ENCODE measurements at regions of chr1 and their contacts with region 1.

Region 1: DNA sequence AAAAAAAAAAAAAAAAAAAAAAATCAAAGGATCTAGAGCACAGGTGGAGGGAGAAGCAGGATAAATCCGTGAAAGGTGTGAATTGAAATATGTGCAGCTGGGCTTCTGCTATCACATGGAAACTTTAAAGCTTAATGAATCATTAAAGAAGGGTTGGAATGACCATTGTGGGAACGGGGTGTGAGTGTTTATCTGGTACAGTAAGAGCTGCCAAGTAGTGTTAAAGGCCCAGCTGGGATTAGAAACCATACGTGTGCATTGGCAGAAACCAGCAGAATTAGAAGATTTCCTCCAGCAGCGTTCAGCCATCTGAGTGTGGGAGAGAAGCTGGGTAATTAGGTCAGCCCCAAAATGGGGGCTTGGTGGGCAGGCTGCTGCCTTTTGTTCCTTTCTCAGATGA is 13.5 kb downstream of the FALEC start:
- DNase-seq: peak; percentile 25
- H3K4me3 Mint-ChIP-seq: no peak overlapping the region
- H3K27ac Mint-ChIP-seq: no peak overlapping the region
- H3K4me1 Mint-ChIP-seq: peaks cover 13% of the 10 kb centered on the region
- H3K27me3 Mint-ChIP-seq: no peaks in the 10 kb centered on the region
- CTCF ChIP-seq: no peak

Region 2: GRCh38 chr1:150268705-150269403 is 260.2 kb before region 1 on chr1 and contains the start of gene APH1A:
- CTCF ChIA-PET with region 1: interaction called, 10 read pairs
- POLR2A ChIA-PET with region 1: no interaction called
- intact Hi-C with region 1: no loop called
- DNase-seq: peak; percentile 99
- H3K4me3 Mint-ChIP-seq: peak within 1 kb of the TSS; percentile 81
- H3K27ac Mint-ChIP-seq: peak within 1 kb of the TSS; percentile 83
- H3K4me1 Mint-ChIP-seq: peaks cover 32% of the 10 kb centered on the region
- H3K27me3 Mint-ChIP-seq: no peaks in the 10 kb centered on the region
- CTCF ChIP-seq: no peak
- total RNA-seq, gene APH1A: 123 and 154 TPM in 2 replicates

Region 3: GRCh38 chr1:150366416-150367296 is 162.4 kb before region 1 on chr1:
- CTCF ChIA-PET with region 1: no interaction called
- POLR2A ChIA-PET with region 1: no interaction called
- intact Hi-C with region 1: no loop called
- DNase-seq: peak; percentile 35
- H3K4me3 Mint-ChIP-seq: peak overlapping the region; percentile 92
- H3K27ac Mint-ChIP-seq: peak overlapping the region; percentile 97
- H3K4me1 Mint-ChIP-seq: peaks cover 25% of the 10 kb centered on the region
- H3K27me3 Mint-ChIP-seq: no peaks in the 10 kb centered on the region
- CTCF ChIP-seq: no peak

Region 4: GRCh38 chr1:150464422-150464826 is 64.6 kb before region 1 on chr1:
- CTCF ChIA-PET with region 1: interaction called, 13 read pairs
- POLR2A ChIA-PET with region 1: no interaction called
- intact Hi-C with region 1: loop called (anchors 1 kb)
- DNase-seq: peak; percentile 72
- H3K4me3 Mint-ChIP-seq: no peak overlapping the region
- H3K27ac Mint-ChIP-seq: no peak overlapping the region
- H3K4me1 Mint-ChIP-seq: no peaks in the 10 kb centered on the region
- H3K27me3 Mint-ChIP-seq: no peaks in the 10 kb centered on the region
- CTCF ChIP-seq: peak; percentile 80

Region 5: DNA sequence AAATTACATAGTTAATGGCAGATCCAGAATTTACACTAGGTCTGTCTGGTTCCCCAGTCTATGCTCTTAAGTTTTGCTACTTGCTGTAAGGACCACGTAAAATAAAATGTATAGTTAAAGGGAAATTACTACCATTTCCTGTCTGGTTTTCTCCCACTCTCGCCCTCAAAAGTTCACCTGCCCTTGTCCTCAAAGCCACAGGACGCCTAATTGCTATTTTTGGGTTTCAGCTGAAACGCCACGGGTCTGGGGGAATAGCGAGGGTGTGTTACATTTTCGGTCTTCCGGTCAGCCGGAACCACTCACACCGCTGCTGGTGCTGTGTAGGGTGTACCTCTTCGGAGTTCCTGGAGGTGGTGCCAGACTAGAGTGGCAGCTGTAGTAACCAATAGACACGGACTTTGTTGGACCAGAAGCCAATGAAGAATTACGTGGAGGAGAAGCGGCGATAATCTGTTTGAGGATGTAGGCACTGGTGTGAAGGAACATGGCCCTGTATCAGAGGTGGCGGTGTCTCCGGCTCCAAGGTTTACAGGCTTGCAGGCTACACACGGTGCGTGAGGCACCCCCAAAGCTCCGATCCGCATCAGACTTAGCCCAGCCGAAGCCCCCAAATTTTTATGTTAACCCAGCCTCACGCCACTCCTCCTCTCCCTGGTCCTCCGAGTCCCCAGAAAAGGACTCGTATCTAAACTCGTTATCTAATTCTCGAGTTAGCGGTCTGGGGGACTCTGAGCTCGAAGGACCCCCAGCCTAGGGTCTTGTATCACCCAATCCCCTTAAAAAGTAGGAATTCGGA is 41.9 kb before region 1 on chr1 and contains the start of gene TARS2:
- CTCF ChIA-PET with region 1: interaction called, 7 read pairs
- POLR2A ChIA-PET with region 1: interaction called, 11 read pairs
- intact Hi-C with region 1: loop called (anchors 1 kb)
- DNase-seq: peak; percentile 100
- H3K4me3 Mint-ChIP-seq: peak within 1 kb of the TSS; percentile 99
- H3K27ac Mint-ChIP-seq: peak within 1 kb of the TSS; percentile 93
- H3K4me1 Mint-ChIP-seq: peaks cover 14% of the 10 kb centered on the region
- H3K27me3 Mint-ChIP-seq: no peaks in the 10 kb centered on the region
- CTCF ChIP-seq: no peak
- total RNA-seq, gene TARS2: 43.1 and 65.3 TPM in 2 replicates

Region 6: GRCh38 chr1:150515328-150516048 is 13.5 kb before region 1 on chr1 and contains the start of gene FALEC:
- CTCF ChIA-PET with region 1: interaction called, 44 read pairs
- POLR2A ChIA-PET with region 1: interaction called, 17 read pairs
- intact Hi-C with region 1: no loop called
- DNase-seq: peak; percentile 98
- H3K4me3 Mint-ChIP-seq: peak within 1 kb of the TSS; percentile 69
- H3K27ac Mint-ChIP-seq: peak within 1 kb of the TSS; percentile 36
- H3K4me1 Mint-ChIP-seq: peaks cover 10% of the 10 kb centered on the region
- H3K27me3 Mint-ChIP-seq: no peaks in the 10 kb centered on the region
- CTCF ChIP-seq: no peak
- total RNA-seq, gene FALEC: not detected in 2 replicates

Region 7: DNA sequence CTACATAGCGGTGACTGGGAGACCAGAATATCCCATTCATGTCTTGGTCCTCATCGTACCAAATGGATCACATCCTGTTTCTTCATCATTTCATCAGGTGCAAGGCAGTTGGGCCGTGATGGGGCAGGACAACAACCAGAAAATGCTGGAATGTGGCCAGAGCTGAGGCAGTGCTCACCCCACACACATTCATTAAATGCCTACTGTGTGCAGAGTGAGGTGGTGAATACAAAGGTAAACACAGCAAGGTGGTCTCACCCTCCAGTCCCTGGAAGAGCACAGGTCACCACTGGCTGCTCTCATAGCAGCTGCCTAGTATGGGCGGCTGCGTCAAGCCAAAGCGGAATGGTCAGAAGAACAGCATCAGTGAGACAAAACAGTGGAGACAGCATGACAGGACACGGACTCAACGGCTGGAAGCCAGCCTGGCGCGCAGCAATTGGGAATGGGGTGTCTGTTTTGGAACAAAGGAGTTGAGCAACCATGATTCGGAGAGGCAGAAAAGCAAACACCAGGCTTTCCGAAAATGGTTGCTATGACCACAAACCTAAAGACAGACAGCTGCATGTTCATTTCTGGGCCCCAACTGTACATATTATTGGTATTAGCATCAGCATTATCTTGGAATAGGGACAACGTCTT is 14.6 kb after region 1 on chr1:
- CTCF ChIA-PET with region 1: interaction called, 30 read pairs
- POLR2A ChIA-PET with region 1: interaction called, 6 read pairs
- intact Hi-C with region 1: no loop called
- DNase-seq: peak; percentile 17
- H3K4me3 Mint-ChIP-seq: no peak overlapping the region
- H3K27ac Mint-ChIP-seq: no peak overlapping the region
- H3K4me1 Mint-ChIP-seq: peaks cover 6% of the 10 kb centered on the region
- H3K27me3 Mint-ChIP-seq: no peaks in the 10 kb centered on the region
- CTCF ChIP-seq: no peak

Measured in MCF 10A (cell line).